ENCODE measurements at regions of chr12 and their contacts with region 1.

Region 1: DNA sequence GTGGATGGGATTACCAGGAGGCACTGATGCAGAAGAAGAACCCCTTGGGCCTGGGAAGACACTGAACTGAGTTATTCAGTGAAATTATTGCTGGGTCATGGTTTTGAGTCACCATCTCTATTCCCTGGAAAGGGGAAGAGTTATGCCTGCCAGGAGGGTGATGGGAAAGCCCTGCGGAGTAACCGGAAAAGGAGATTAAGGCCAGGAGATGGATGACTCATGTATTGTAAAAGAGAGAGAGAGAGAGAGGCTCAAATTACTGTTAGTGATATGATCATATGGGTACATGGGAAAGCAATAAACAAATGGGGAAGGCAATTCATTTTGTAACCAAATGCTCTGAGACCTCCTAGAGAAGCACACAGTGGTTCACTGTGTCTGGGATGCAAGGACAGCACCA is 243.9 kb downstream of the TMEM132D start:
- DNase-seq: no peak
- ATAC-seq: no peak
- H3K4me3 ChIP-seq: no peak overlapping the region
- H3K4me3 Mint-ChIP-seq: no peak overlapping the region
- H3K27ac ChIP-seq: no peak overlapping the region
- H3K27ac Mint-ChIP-seq: no peak overlapping the region
- H3K4me1 ChIP-seq: no peaks in the 10 kb centered on the region
- H3K4me1 Mint-ChIP-seq: no peaks in the 10 kb centered on the region
- H3K27me3 ChIP-seq: no peaks in the 10 kb centered on the region
- H3K27me3 Mint-ChIP-seq: no peaks in the 10 kb centered on the region
- CTCF ChIP-seq: no peak

Region 2: DNA sequence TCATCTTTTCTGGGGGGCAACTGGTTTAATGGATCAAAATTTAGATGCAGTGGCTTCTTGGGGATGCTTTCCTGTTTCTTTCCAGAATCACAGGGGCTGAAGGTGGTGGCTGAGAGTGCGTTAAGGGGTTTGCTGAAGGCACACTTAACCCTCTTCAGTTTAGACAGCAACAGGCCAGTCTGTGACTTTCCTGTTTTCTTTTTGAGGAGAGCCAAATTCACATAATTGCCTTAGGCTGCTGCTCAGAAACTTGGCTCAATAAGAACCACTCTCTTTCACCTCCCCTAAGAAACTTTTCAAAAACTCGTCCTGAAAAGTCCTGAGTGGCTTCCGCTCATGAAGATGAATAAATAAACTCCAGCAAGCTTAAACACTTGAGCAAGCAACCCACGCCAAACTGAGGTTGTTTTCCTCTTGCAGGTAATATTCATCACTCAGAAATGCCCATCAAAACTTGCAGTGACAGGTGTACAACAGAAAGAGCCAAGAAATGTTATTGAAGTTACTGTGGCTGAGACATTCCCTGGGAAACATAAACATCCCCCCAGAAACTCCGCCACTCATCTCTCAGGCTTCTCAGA is 266.5 kb before region 1 on chr12:
- CTCF ChIA-PET with region 1: no interaction called
- POLR2A ChIA-PET with region 1: no interaction called
- intact Hi-C with region 1: loop called in 1 of 2 experiments (anchors 10 kb)
- DNase-seq: no peak
- ATAC-seq: no peak
- H3K4me3 ChIP-seq: no peak overlapping the region
- H3K4me3 Mint-ChIP-seq: no peak overlapping the region
- H3K27ac ChIP-seq: no peak overlapping the region
- H3K27ac Mint-ChIP-seq: no peak overlapping the region
- H3K4me1 ChIP-seq: no peaks in the 10 kb centered on the region
- H3K4me1 Mint-ChIP-seq: no peaks in the 10 kb centered on the region
- H3K27me3 ChIP-seq: no peaks in the 10 kb centered on the region
- H3K27me3 Mint-ChIP-seq: no peaks in the 10 kb centered on the region
- CTCF ChIP-seq: no peak